Right cardiac atrium (tissue), 5 donors: ENCODE measurements at regions of chrX and their contacts with region 1.

Region 1: DNA sequence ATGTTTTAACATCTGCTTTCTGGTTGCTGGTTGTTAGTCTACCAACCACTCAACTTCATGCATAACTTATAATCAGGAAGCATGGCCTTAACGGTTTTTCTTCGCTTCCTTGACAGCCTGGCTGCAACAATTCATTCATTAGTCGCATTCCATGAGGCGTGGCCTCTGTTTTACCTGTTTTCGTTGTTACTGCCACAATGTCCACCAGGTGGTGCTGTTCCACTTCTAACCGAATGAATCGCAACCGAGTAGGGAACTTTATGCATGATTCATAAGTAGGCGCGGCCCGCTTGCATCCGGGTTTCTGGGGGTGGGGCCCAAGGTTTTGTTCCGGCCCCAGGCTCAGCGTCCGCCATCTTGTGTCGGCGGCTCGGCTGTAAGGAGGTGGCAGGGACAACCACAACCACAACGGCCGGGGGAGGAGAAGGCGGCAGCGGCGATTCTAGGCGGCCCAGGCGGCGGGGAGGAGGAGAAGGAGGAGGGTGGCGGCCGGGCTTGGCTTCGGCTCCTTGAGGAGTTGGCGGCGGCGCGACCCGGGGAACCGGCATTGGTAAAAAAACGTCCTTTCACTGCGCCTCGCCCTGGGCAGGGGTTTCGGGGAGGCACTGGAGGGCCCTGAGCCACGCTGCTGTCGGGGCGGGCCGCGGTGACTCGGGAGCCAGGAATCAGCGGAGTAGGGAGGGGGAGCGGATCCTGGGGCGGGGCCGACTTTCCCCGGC is at the start of gene UBA1:
- DNase-seq: peak; percentile 96 to 98 (median 97)
- ATAC-seq: peak; percentile 93 to 94
- H3K4me3 ChIP-seq: peak within 1 kb of the TSS; percentile 82
- H3K27ac ChIP-seq: peak within 1 kb of the TSS; percentile 100
- H3K4me1 ChIP-seq: peaks cover 11% of the 10 kb centered on the region
- H3K27me3 ChIP-seq: no peaks in the 10 kb centered on the region
- total RNA-seq, gene UBA1: 109 to 130 (median 114) TPM

Region 2: GRCh38 chrX:47384502-47384901 is 190.9 kb after region 1 on chrX:
- intact Hi-C with region 1: loop called in 3 of 4 experiments (anchors 5 kb)
- DNase-seq: peak in 2 of 3 donors; percentile 41 to 51
- ATAC-seq: peak; percentile 55 to 67
- H3K4me3 ChIP-seq: no peak overlapping the region
- H3K27ac ChIP-seq: no peak overlapping the region
- H3K4me1 ChIP-seq: no peaks in the 10 kb centered on the region
- H3K27me3 ChIP-seq: no peaks in the 10 kb centered on the region

Region 3: DNA sequence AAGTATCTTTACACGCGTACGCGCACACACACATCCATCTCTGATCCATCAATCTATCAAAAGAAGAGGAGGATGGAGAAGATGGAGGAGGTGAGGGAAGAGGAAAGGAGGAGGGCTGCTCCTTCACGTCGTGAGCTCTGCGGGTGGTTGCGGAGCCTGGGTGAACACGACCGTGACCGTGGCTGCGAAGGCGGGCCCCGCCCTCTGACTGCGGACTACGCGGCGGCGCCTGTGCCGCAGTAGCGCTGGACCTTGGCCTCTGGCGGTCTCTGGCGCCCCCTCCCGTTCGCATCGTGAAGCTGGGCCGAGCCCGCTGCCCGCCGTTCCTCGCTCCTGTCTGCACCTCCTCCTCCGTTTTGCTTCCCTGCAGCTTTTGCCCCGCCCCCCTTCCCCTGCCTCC is 329.7 kb after region 1 on chrX:
- intact Hi-C with region 1: loop called in 1 of 4 experiments (anchors 5 kb)
- DNase-seq: peak; percentile 83 to 93 (median 93)
- ATAC-seq: peak; percentile 97 to 98
- H3K4me3 ChIP-seq: peak overlapping the region; percentile 55
- H3K27ac ChIP-seq: no peak overlapping the region
- H3K4me1 ChIP-seq: no peaks in the 10 kb centered on the region
- H3K27me3 ChIP-seq: no peaks in the 10 kb centered on the region